HCT116 (cell line): ENCODE measurements at regions of chr3 and their contacts with region 1.

Region 1: GRCh38 chr3:149771652-149772271 is 19.5 kb upstream of the COMMD2 start:
- DNase-seq: peak; percentile 33
- ATAC-seq: peak; percentile 97
- H3K4me3 ChIP-seq: no peak overlapping the region
- H3K27ac ChIP-seq: no peak overlapping the region
- H3K4me1 ChIP-seq: no peaks in the 10 kb centered on the region
- H3K27me3 ChIP-seq: no peaks in the 10 kb centered on the region
- CTCF ChIP-seq: peak; percentile 78 to 87 (median 81)
- POLR2A ChIP-seq: no peak
- RAD21 ChIP-seq: peak; percentile 74

Region 2: GRCh38 chr3:149009732-149010131 is 762.0 kb before region 1 on chr3:
- CTCF ChIA-PET with region 1: no interaction called
- POLR2A ChIA-PET with region 1: no interaction called
- RAD21 ChIA-PET with region 1: no interaction called
- intact Hi-C with region 1: no loop called
- DNase-seq: no peak
- ATAC-seq: no peak
- H3K4me3 ChIP-seq: no peak overlapping the region
- H3K27ac ChIP-seq: no peak overlapping the region
- H3K4me1 ChIP-seq: no peaks in the 10 kb centered on the region
- H3K27me3 ChIP-seq: no peaks in the 10 kb centered on the region
- CTCF ChIP-seq: no peak
- POLR2A ChIP-seq: no peak
- RAD21 ChIP-seq: no peak

Region 3: DNA sequence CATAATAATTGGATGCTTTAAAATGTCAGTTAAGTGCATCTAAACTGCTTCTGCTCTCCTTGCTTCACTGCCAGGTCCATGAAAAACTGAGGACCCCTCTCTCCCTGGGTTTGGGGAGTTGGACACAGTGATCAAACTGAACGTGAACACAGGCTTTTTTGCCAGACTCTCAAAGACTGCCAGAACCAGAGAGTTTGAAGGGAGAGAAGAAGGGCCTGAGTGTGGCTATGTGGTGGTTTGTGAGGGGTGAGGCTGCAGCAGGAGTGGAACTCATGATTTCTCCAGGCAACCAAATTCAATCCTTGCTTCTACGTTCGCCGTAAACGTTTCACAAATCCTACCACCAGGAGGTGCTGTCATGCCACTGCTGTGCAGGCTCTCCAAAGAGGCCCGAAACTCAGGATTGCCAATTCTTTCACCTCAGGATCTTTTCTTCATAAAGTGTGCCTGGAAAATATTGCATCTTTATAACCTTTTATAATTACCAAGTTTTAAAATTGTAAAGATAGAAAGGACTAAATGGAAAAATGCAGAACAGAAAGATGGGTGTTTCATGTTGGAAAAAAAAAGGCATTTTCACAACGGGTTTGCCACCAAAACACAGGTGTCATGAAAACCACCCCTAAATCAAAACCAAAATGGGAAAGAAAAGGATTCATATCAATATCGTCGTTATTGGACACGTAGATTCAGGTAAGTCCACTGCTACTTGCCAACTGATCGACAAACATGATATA is 277.6 kb before region 1 on chr3:
- CTCF ChIA-PET with region 1: interaction called, 4 read pairs
- POLR2A ChIA-PET with region 1: no interaction called
- RAD21 ChIA-PET with region 1: no interaction called
- intact Hi-C with region 1: loop called (anchors 1 kb)
- DNase-seq: peak; percentile 42
- ATAC-seq: peak; percentile 90
- H3K4me3 ChIP-seq: no peak overlapping the region
- H3K27ac ChIP-seq: no peak overlapping the region
- H3K4me1 ChIP-seq: peaks cover 0 to 9% of the 10 kb centered on the region in 2 experiments; a peak in 1 of 4 replicates
- H3K27me3 ChIP-seq: no peaks in the 10 kb centered on the region
- CTCF ChIP-seq: peak; percentile 85 to 91 (median 86)
- POLR2A ChIP-seq: no peak
- RAD21 ChIP-seq: peak; percentile 93

Region 4: DNA sequence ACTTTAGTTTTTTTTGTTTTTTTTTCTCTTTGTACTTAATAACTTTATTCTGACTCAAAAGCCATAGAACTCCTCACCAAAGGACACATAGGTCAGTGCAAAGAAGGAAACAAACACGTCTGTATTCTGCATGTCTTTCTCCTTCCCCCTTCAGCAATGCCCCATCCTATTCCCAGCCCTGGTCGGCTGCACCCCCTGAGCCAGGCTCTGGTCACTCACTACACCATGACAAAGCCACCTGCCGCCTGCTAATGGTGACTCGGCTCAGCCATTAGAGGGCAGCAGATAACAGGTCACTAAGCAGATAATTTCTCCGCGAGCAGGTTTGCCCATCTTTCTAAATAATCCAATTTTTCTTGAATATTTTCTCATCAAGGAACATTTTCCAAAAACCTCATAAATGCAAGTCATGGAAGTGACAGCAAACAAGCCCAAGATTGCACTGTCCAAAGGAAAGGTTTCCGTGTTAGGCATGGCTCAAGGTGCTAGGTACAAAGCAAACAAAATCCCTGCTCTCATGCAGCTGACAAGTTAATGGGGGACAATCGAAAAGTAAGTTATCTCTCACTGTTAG is 259.5 kb before region 1 on chr3:
- CTCF ChIA-PET with region 1: interaction called, 15 read pairs
- POLR2A ChIA-PET with region 1: no interaction called
- RAD21 ChIA-PET with region 1: interaction called in 1 of 2 experiments, 3 read pairs
- intact Hi-C with region 1: loop called (anchors 1 kb)
- DNase-seq: peak; percentile 50
- ATAC-seq: peak; percentile 99
- H3K4me3 ChIP-seq: no peak overlapping the region
- H3K27ac ChIP-seq: no peak overlapping the region
- H3K4me1 ChIP-seq: no peaks in the 10 kb centered on the region
- H3K27me3 ChIP-seq: no peaks in the 10 kb centered on the region
- CTCF ChIP-seq: peak; percentile 80 to 94 (median 92)
- POLR2A ChIP-seq: no peak
- RAD21 ChIP-seq: peak; percentile 96

Region 5: DNA sequence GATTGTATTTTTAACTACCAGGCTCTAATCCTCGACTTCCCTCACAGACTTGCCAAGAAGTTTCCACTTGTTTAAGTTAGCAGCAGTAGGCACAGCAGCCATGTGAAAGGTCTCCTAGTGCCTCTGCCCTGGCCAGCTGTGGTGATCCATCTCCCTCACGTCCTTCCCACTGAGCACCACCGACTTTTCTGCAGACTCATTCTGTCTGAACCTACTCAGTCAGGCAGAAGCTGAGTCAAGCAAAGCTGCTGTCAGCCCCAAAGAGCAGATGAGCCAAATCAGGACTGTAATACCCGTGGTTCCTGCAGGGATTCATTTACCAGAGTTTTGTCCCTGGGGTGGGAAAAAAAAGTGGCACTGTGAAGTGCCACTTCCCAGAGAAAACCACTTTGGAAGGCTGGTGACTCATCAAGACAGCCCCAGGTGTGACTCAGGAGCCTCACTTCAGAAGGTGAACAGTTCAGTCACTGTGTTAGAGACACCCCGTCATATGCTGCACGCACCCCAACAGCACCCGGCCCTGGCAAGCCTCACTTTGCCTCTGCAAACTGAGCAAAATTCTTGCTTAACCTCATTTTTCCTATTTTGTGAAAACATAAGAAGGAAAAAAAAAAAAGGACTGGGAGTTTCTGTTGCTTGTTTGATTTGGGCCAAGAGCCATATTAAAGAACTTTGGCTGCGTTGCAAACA is 189.9 kb before region 1 on chr3:
- CTCF ChIA-PET with region 1: no interaction called
- POLR2A ChIA-PET with region 1: no interaction called
- RAD21 ChIA-PET with region 1: no interaction called
- intact Hi-C with region 1: no loop called
- DNase-seq: peak; percentile 96
- ATAC-seq: peak; percentile 76
- H3K4me3 ChIP-seq: peak overlapping the region; percentile 15 to 47
- H3K27ac ChIP-seq: peak overlapping the region; percentile 99
- H3K4me1 ChIP-seq: peaks cover 97 to 100% of the 10 kb centered on the region in 2 experiments
- H3K27me3 ChIP-seq: no peaks in the 10 kb centered on the region
- CTCF ChIP-seq: no peak
- POLR2A ChIP-seq: no peak
- RAD21 ChIP-seq: no peak

Region 6: GRCh38 chr3:149783576-149783975 is 11.8 kb after region 1 on chr3:
- CTCF ChIA-PET with region 1: interaction called, 32 read pairs
- POLR2A ChIA-PET with region 1: interaction called, 3 read pairs
- RAD21 ChIA-PET with region 1: no interaction called
- intact Hi-C with region 1: no loop called
- DNase-seq: no peak
- ATAC-seq: peak; percentile 75
- H3K4me3 ChIP-seq: no peak overlapping the region
- H3K27ac ChIP-seq: peak overlapping the region; percentile 25; the same call in 1 of the 2 replicates
- H3K4me1 ChIP-seq: peaks cover 9 to 18% of the 10 kb centered on the region in 2 experiments
- H3K27me3 ChIP-seq: no peaks in the 10 kb centered on the region
- CTCF ChIP-seq: no peak
- POLR2A ChIP-seq: no peak
- RAD21 ChIP-seq: no peak

Region 7: GRCh38 chr3:149808209-149808829 is 36.6 kb after region 1 on chr3:
- CTCF ChIA-PET with region 1: interaction called, 47 read pairs
- POLR2A ChIA-PET with region 1: no interaction called
- RAD21 ChIA-PET with region 1: interaction called, 3 read pairs
- intact Hi-C with region 1: no loop called
- DNase-seq: peak; percentile 70
- ATAC-seq: peak; percentile 31
- H3K4me3 ChIP-seq: no peak overlapping the region
- H3K27ac ChIP-seq: no peak overlapping the region
- H3K4me1 ChIP-seq: peaks cover 19 to 34% of the 10 kb centered on the region in 2 experiments
- H3K27me3 ChIP-seq: no peaks in the 10 kb centered on the region
- CTCF ChIP-seq: peak; percentile 67 to 91 (median 77)
- POLR2A ChIP-seq: no peak
- RAD21 ChIP-seq: peak; percentile 74